ENCODE measurements at regions of chr6 and their contacts with region 1.

Region 1: GRCh38 chr6:26270903-26271667 is 93.9 kb upstream of the BTN3A2 start:
- DNase-seq: peak; percentile 79
- H3K4me3 Mint-ChIP-seq: no peak overlapping the region
- H3K27ac Mint-ChIP-seq: no peak overlapping the region
- H3K4me1 Mint-ChIP-seq: peaks cover 37% of the 10 kb centered on the region
- H3K27me3 Mint-ChIP-seq: no peaks in the 10 kb centered on the region

Region 2: GRCh38 chr6:24313251-24314141 is 1957.6 kb before region 1 on chr6:
- intact Hi-C with region 1: no loop called
- DNase-seq: no peak
- H3K4me3 Mint-ChIP-seq: no peak overlapping the region
- H3K27ac Mint-ChIP-seq: no peak overlapping the region
- H3K4me1 Mint-ChIP-seq: no peaks in the 10 kb centered on the region
- H3K27me3 Mint-ChIP-seq: peaks cover 4% of the 10 kb centered on the region

Region 3: DNA sequence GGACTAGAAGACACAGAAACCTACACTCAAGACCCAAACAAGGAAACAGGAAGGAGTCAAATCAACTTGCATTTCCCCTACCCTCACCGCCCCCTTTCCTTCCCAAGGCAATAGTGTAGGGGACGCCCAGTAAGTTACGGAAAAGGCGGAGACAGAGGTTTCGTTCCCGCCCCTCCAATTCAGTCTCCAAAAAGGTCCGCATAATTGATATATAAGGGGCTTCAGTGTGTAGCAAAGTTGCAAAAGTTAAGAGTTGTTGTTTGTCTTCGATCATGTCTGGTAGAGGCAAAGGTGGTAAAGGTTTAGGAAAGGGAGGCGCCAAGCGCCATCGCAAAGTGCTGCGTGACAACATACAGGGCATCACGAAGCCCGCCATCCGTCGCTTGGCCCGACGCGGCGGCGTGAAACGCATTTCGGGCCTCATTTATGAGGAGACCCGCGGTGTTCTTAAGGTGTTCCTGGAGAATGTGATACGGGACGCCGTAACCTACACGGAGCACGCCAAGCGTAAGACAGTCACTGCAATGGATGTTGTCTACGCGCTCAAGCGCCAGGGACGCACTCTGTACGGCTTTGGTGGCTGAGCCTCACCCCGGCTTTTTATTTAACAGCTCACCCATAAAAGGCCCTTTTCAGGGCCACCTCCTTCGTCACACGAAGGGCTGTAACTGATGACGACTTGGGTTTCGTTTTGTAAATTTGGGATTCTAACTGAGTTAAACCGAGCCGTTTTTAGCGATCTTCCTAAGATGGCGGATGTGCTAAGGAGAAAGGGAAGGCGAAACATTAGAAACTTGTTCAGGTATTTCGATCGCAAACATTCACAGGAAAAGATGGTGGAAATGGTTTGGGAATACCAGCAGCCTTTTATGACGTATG is 30.7 kb before region 1 on chr6:
- intact Hi-C with region 1: loop called (anchors 2 kb)
- DNase-seq: peak; percentile 81
- H3K4me3 Mint-ChIP-seq: peak overlapping the region; percentile 81
- H3K27ac Mint-ChIP-seq: peak overlapping the region; percentile 96
- H3K4me1 Mint-ChIP-seq: peaks cover 37% of the 10 kb centered on the region
- H3K27me3 Mint-ChIP-seq: no peaks in the 10 kb centered on the region

Region 4: GRCh38 chr6:26249957-26250697 is 21.0 kb before region 1 on chr6:
- intact Hi-C with region 1: loop called (anchors 1 kb)
- DNase-seq: peak; percentile 74
- H3K4me3 Mint-ChIP-seq: peak overlapping the region; percentile 92
- H3K27ac Mint-ChIP-seq: peak overlapping the region; percentile 98
- H3K4me1 Mint-ChIP-seq: peaks cover 46% of the 10 kb centered on the region
- H3K27me3 Mint-ChIP-seq: no peaks in the 10 kb centered on the region

Region 5: DNA sequence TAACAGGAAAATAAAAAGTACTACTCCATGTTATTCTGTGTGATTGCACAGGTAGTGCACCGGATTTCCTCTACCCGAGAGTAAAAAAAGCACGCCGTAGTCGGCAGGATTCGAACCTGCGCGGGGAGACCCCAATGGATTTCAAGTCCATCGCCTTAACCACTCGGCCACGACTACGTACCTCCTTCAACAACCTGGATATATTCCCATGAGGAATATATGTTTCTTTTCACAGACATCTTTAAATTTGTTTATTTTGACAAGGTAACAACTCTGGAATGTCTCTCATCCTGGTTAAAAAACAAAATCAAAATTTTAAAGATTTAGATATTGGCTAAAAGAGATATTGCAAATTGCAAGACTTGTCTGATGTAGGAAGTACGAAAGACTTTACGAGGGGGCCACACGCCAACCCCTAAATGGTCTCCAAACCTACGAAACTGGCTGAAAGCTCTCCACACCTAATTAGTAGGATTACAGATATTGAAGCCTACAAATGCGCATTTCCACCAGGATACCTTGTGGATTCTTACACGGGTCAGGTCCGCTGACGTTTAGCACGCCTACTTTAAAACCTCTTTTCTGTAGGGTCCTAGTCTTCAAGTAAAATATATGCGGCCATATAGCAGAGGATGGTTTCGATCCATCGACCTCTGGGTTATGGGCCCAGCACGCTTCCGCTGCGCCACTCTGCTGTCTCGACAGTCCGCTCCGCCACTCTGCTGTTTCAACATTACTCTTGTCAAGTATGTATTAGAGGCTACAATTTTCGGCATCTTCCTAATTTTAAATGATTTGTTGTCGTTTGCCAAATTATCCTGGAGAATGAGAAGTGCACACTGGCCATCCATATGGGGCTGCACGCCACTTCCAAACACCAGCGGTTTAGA is 41.7 kb after region 1 on chr6:
- intact Hi-C with region 1: loop called (anchors 5 kb)
- DNase-seq: peak; percentile 79
- H3K4me3 Mint-ChIP-seq: peak overlapping the region; percentile 85
- H3K27ac Mint-ChIP-seq: peak overlapping the region; percentile 82
- H3K4me1 Mint-ChIP-seq: peaks cover 50% of the 10 kb centered on the region
- H3K27me3 Mint-ChIP-seq: no peaks in the 10 kb centered on the region

Measured in activated T-helper 2 cell treated with anti-CD3 and anti-CD28 coated beads, Interferon-gamma antibody, Interleukin-2, Interleukin-4, amounts not matched to agents 10 μg/mL and 5 μg/mL and 100 μg/mL, durations not matched to agents 14 hours and 24 hours and 36 hours (primary cell).